ENCODE measurements at regions of chr7 and their contacts with region 1.

Region 1: DNA sequence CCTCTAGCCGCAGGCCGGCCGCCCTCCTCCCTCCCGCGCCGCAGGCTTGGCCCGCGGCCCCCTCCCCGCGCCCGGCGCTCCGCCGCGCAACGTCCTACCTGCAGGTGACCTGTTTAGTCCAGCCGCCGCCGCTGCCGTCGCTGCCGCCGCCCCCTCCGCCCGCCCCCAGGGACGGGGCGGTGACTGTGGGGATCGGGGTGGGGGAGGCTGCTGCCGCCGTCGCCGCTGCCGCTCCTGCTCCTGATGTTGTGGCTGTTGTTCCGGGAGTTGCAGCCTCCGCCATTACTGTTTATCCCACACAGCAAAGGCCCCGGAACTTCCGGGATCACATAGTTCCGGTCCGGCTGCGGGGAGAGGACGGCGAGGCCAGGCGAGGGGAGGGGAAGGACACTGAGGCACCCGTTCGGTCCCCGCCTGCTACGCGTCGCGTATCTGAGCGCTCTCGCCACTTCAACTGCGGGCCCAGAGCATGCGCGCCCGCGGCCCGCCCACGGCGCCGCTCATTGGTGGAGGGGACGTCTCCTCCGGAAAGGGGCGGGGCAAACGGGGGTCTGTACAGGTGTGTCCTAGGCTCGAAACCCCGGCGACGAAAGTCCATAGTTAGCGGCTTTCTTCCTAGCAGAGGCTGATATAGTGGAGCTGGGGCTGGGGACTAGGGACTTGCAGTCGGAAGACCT is at the start of gene MKRN1:
- DNase-seq: peak; percentile 92 to 98
- H3K4me3 ChIP-seq: peak within 1 kb of the TSS; percentile 86
- H3K27ac ChIP-seq: peak within 1 kb of the TSS; percentile 71
- H3K4me1 ChIP-seq: peaks cover 26% of the 10 kb centered on the region
- H3K27me3 ChIP-seq: no peaks in the 10 kb centered on the region
- CTCF ChIP-seq: no peak
- total RNA-seq, gene MKRN1: 166 and 182 TPM in 2 replicates

Region 2: DNA sequence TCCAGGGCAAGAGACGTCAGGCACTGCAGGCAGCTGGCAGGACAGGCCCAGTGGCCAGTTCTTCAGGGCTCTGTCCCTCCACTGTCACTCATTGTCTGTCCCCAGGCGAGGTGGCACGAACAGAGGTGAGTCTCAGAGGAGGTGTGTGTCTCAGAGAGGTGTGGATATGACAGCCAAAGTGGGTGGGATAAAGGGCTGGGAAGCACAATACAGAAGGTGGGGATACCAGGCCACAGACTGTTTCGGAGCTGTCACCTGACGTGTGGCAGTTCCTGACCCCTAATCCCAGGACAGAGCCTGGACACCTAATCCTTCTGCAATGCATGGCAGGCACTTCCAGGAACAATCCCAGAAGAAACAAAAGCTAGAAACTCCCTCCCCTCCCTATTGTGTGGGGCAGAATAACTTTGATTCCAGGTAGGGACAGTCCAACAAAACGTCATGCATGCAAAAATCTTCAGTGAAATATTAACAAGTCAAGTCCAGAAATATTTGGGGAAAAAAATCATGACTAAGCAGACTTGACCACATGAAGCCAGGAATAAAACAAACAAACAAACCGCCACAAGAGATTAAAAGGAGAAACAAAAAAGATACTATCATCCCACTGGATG is 1007.4 kb before region 1 on chr7:
- CTCF ChIA-PET with region 1: no interaction called
- POLR2A ChIA-PET with region 1: no interaction called
- intact Hi-C with region 1: no loop called
- DNase-seq: peak; percentile 58 to 76
- H3K4me3 ChIP-seq: no peak overlapping the region
- H3K27ac ChIP-seq: peak overlapping the region; percentile 25
- H3K4me1 ChIP-seq: peaks cover 12% of the 10 kb centered on the region
- H3K27me3 ChIP-seq: no peaks in the 10 kb centered on the region
- CTCF ChIP-seq: no peak

Region 3: GRCh38 chr7:140175221-140176121 is 303.7 kb before region 1 on chr7:
- CTCF ChIA-PET with region 1: no interaction called
- POLR2A ChIA-PET with region 1: no interaction called
- intact Hi-C with region 1: loop called (anchors 2 kb)
- DNase-seq: peak; percentile 89 to 95
- H3K4me3 ChIP-seq: peak overlapping the region; percentile 95
- H3K27ac ChIP-seq: peak overlapping the region; percentile 6; the same call in 1 of the 2 replicates
- H3K4me1 ChIP-seq: peaks cover 13% of the 10 kb centered on the region
- H3K27me3 ChIP-seq: no peaks in the 10 kb centered on the region
- CTCF ChIP-seq: peak; percentile 90

Region 4: GRCh38 chr7:140275069-140275965 is 203.9 kb before region 1 on chr7:
- CTCF ChIA-PET with region 1: no interaction called
- POLR2A ChIA-PET with region 1: no interaction called
- intact Hi-C with region 1: no loop called
- DNase-seq: no peak
- H3K4me3 ChIP-seq: no peak overlapping the region
- H3K27ac ChIP-seq: no peak overlapping the region
- H3K4me1 ChIP-seq: no peaks in the 10 kb centered on the region
- H3K27me3 ChIP-seq: 0 out of 2 replicates have a peak, but pooled peaks cover 4% of the 10 kb centered on the region
- CTCF ChIP-seq: no peak

Region 5: GRCh38 chr7:140435252-140435895 is 43.8 kb before region 1 on chr7:
- CTCF ChIA-PET with region 1: no interaction called
- POLR2A ChIA-PET with region 1: no interaction called
- intact Hi-C with region 1: no loop called
- DNase-seq: no peak
- H3K4me3 ChIP-seq: no peak overlapping the region
- H3K27ac ChIP-seq: no peak overlapping the region
- H3K4me1 ChIP-seq: no peaks in the 10 kb centered on the region
- H3K27me3 ChIP-seq: no peaks in the 10 kb centered on the region
- CTCF ChIP-seq: no peak

Region 6: GRCh38 chr7:140517546-140518369 is 38.6 kb after region 1 on chr7:
- CTCF ChIA-PET with region 1: interaction called, 7 read pairs
- POLR2A ChIA-PET with region 1: no interaction called
- intact Hi-C with region 1: loop called (anchors 1 kb)
- DNase-seq: peak; percentile 78 to 92
- H3K4me3 ChIP-seq: no peak overlapping the region
- H3K27ac ChIP-seq: no peak overlapping the region
- H3K4me1 ChIP-seq: peaks cover 11% of the 10 kb centered on the region
- H3K27me3 ChIP-seq: no peaks in the 10 kb centered on the region
- CTCF ChIP-seq: peak; percentile 96

Region 7: GRCh38 chr7:140541513-140542227 is 62.5 kb after region 1 on chr7:
- CTCF ChIA-PET with region 1: interaction called, 10 read pairs
- POLR2A ChIA-PET with region 1: no interaction called
- intact Hi-C with region 1: no loop called
- DNase-seq: peak; percentile 68 to 82
- H3K4me3 ChIP-seq: peak overlapping the region; percentile 40; the same call in 1 of the 2 replicates
- H3K27ac ChIP-seq: peak overlapping the region; percentile 54
- H3K4me1 ChIP-seq: peaks cover 19% of the 10 kb centered on the region
- H3K27me3 ChIP-seq: no peaks in the 10 kb centered on the region
- CTCF ChIP-seq: no peak

Region 8: DNA sequence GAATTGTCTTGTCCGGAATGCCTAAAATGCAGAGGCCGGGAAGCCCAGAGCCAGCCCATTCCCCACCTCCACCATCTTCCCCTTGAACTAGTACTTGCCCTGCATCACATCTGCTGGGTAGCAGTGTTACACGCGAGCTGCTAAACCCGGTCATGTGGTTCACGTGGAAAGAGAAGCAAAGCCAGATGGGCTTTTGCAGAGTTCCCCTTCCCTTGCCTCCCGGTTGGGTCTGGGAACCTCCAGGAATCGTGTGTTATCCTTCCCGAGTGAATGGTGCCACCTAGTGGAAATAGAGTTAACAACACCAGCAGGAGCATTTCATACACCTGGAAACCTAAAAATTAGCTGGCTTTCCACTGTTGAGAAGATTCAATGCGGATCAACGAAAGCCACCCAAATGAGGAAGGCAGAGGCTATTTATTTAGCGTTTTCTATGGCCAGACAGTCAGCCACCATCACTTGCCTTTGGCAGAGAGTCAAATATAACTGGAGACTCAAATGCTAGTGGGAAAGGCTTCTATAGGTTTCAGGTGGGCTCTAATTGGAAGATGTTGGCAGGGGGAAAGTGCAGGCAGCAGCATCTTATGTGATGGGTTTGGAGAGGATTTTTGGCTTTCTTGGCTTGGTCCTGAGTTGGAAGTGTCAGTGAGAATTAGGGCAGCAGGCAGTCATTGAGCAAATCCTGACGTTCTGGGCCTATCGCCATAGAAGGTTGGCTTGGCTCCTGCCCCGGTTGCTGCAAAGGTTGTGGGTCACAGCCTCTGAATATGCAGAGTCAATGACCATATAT is 174.3 kb after region 1 on chr7:
- CTCF ChIA-PET with region 1: interaction called, 10 read pairs
- POLR2A ChIA-PET with region 1: interaction called, 5 read pairs
- intact Hi-C with region 1: loop called (anchors 1 kb)
- DNase-seq: peak; percentile 63 to 64
- H3K4me3 ChIP-seq: no peak overlapping the region
- H3K27ac ChIP-seq: no peak overlapping the region
- H3K4me1 ChIP-seq: peaks cover 55% of the 10 kb centered on the region
- H3K27me3 ChIP-seq: no peaks in the 10 kb centered on the region
- CTCF ChIP-seq: peak; percentile 95

Region 9: GRCh38 chr7:140778975-140779374 is 299.8 kb after region 1 on chr7:
- CTCF ChIA-PET with region 1: no interaction called
- POLR2A ChIA-PET with region 1: no interaction called
- intact Hi-C with region 1: loop called (anchors 10 kb)
- DNase-seq: no peak
- H3K4me3 ChIP-seq: no peak overlapping the region
- H3K27ac ChIP-seq: no peak overlapping the region
- H3K4me1 ChIP-seq: no peaks in the 10 kb centered on the region
- H3K27me3 ChIP-seq: no peaks in the 10 kb centered on the region
- CTCF ChIP-seq: no peak

Region 10: DNA sequence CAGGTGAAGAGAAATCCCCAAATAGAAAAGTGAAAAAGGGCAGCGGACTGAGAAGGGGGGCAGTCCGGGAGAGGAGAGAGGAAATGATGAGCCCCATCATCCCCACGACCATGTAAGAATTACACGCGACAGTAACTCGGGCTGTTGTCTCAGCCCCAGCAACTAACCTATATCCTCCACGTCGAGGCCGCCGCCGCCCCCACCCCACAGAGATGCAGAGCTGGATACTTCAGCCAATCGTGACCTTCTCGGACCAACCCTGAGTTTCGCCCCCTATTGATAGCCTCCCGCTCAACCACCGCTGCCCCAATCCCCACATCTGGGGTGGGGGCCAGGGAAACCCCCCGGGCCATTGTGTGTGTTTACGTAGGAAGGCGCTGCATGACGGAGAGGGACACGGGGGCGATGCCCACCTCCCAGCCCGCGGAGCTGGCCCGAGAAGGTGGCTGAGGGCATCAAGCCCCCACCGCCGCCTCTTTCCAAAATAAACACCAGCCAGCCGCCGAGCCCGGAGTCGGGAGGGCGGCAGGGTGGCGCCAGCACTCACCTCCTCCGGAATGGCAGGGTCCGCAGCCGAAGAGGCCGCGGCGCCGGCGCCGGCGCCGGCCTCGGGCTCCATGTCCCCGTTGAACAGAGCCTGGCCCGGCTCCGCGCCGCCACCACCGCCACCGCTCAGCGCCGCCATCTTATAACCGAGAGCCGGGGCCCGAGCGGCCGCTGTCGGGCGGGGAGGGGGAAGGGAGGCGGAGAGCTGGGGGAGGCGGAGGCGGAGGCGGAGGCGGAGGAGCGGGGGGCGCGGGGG is 445.0 kb after region 1 on chr7:
- CTCF ChIA-PET with region 1: no interaction called
- POLR2A ChIA-PET with region 1: no interaction called
- intact Hi-C with region 1: loop called (anchors 10 kb)
- DNase-seq: peak; percentile 51 to 69
- H3K4me3 ChIP-seq: peak overlapping the region; percentile 98
- H3K27ac ChIP-seq: peak overlapping the region; percentile 85
- H3K4me1 ChIP-seq: peaks cover 50% of the 10 kb centered on the region
- H3K27me3 ChIP-seq: no peaks in the 10 kb centered on the region
- CTCF ChIP-seq: peak; percentile 66

Measured in PC-9 (cell line).